Caco-2 (cell line): ENCODE measurements at regions of chr6 and their contacts with region 1.

Region 1: DNA sequence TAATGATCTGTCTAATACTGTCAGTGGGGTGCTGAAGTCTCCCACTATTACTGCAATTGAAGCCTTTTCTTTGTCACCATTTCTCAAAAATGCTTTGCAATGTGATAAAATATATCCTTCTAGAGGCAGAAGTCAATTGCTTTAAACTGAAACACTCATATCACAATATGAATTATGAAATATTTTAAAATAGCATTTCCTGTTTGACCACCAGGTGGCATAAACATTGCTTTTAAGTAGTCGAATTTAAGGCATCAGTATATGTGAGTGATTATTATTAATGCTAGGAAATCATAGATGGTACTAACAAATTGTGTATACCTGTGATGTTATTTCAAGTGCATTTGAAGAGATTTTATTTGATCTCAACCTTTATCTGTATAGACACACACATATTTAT is 87.5 kb downstream of the MEI4 start:
- DNase-seq: peak in 1 of 2 experiments; percentile 2
- H3K4me3 ChIP-seq: no peak overlapping the region
- H3K4me3 Mint-ChIP-seq: no peak overlapping the region
- H3K27ac Mint-ChIP-seq: no peak overlapping the region
- H3K4me1 ChIP-seq: no peaks in the 10 kb centered on the region
- H3K4me1 Mint-ChIP-seq: no peaks in the 10 kb centered on the region
- H3K27me3 ChIP-seq: no peaks in the 10 kb centered on the region
- H3K27me3 Mint-ChIP-seq: no peaks in the 10 kb centered on the region
- CTCF ChIP-seq: peak; percentile 41 to 44

Region 2: GRCh38 chr6:77620278-77620882 is 120.0 kb before region 1 on chr6:
- CTCF ChIA-PET with region 1: no interaction called
- POLR2A ChIA-PET with region 1: no interaction called
- intact Hi-C with region 1: loop called (anchors 10 kb)
- DNase-seq: peak; percentile 32 to 47
- H3K4me3 ChIP-seq: no peak overlapping the region
- H3K4me3 Mint-ChIP-seq: no peak overlapping the region
- H3K27ac Mint-ChIP-seq: no peak overlapping the region
- H3K4me1 ChIP-seq: no peaks in the 10 kb centered on the region
- H3K4me1 Mint-ChIP-seq: no peaks in the 10 kb centered on the region
- H3K27me3 ChIP-seq: no peaks in the 10 kb centered on the region
- H3K27me3 Mint-ChIP-seq: no peaks in the 10 kb centered on the region
- CTCF ChIP-seq: peak; percentile 64

Region 3: DNA sequence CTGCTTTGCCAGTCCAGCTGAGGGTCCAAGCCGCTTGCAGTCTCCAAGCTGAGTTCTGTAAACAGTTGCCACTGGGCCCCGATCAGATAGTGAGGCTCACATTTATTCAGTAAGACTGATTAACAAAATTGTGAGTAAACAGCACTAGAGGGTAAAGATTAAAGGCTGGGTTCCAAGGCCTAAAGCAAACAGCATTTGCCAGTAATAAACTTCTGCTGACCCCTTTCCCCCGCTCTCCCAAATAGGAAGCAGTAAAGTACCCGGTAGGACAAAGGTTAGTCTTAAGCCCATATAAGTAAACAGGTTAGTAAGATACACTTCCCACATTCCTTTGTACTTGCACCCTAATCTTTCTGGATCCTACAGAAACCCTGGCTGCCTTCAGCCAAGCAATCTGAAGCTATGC is 94.2 kb after region 1 on chr6:
- CTCF ChIA-PET with region 1: no interaction called
- POLR2A ChIA-PET with region 1: no interaction called
- intact Hi-C with region 1: loop called (anchors 1 kb)
- DNase-seq: peak; percentile 73 to 81
- H3K4me3 ChIP-seq: no peak overlapping the region
- H3K4me3 Mint-ChIP-seq: no peak overlapping the region
- H3K27ac Mint-ChIP-seq: no peak overlapping the region
- H3K4me1 ChIP-seq: peaks cover 15% of the 10 kb centered on the region
- H3K4me1 Mint-ChIP-seq: peaks cover 6% of the 10 kb centered on the region
- H3K27me3 ChIP-seq: no peaks in the 10 kb centered on the region
- H3K27me3 Mint-ChIP-seq: no peaks in the 10 kb centered on the region
- CTCF ChIP-seq: no peak

Region 4: DNA sequence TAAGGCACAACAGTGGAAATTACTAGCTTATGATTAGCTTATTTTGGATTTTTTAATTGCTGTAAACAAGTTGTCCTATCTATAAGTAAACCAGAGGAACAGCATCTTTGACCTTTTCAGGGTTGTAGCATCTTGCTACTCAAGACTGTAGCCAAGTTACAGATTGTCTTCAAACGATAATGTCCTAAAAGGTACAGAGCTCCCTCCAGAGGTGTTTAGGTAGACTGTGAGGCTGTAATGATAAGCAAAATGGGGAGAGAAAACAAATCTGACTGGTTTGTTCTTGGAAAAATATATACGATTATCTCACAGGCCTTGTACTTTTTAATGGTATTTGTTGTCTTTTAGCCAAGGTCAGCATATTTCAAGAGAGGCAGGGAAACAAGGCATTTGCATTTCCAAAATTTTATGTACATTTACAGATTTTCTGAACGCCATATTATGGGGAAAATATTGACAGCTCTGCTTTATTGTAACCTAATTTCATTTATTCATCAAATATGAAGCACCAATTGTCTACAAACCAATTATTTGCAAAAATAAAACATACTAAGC is 185.9 kb after region 1 on chr6:
- CTCF ChIA-PET with region 1: no interaction called
- POLR2A ChIA-PET with region 1: no interaction called
- intact Hi-C with region 1: loop called (anchors 1 kb)
- DNase-seq: peak in 1 of 2 experiments; percentile 25
- H3K4me3 ChIP-seq: no peak overlapping the region
- H3K4me3 Mint-ChIP-seq: no peak overlapping the region
- H3K27ac Mint-ChIP-seq: no peak overlapping the region
- H3K4me1 ChIP-seq: no peaks in the 10 kb centered on the region
- H3K4me1 Mint-ChIP-seq: no peaks in the 10 kb centered on the region
- H3K27me3 ChIP-seq: no peaks in the 10 kb centered on the region
- H3K27me3 Mint-ChIP-seq: no peaks in the 10 kb centered on the region
- CTCF ChIP-seq: peak; percentile 50 to 53

Region 5: GRCh38 chr6:78300885-78301284 is 560.5 kb after region 1 on chr6:
- CTCF ChIA-PET with region 1: no interaction called
- POLR2A ChIA-PET with region 1: no interaction called
- intact Hi-C with region 1: no loop called
- DNase-seq: no peak
- H3K4me3 ChIP-seq: no peak overlapping the region
- H3K4me3 Mint-ChIP-seq: no peak overlapping the region
- H3K27ac Mint-ChIP-seq: no peak overlapping the region
- H3K4me1 ChIP-seq: no peaks in the 10 kb centered on the region
- H3K4me1 Mint-ChIP-seq: peaks cover 7% of the 10 kb centered on the region
- H3K27me3 ChIP-seq: no peaks in the 10 kb centered on the region
- H3K27me3 Mint-ChIP-seq: no peaks in the 10 kb centered on the region
- CTCF ChIP-seq: no peak